ENCODE measurements at regions of chr17 and their contacts with region 1.

Region 1: GRCh38 chr17:72725433-72726068 is 366.9 kb downstream of the SLC39A11 start:
- H3K4me3 Mint-ChIP-seq: no peak overlapping the region
- H3K27ac Mint-ChIP-seq: no peak overlapping the region
- H3K4me1 Mint-ChIP-seq: peaks cover 37% of the 10 kb centered on the region
- H3K27me3 Mint-ChIP-seq: no peaks in the 10 kb centered on the region

Region 2: GRCh38 chr17:72104164-72104862 is 621.2 kb before region 1 on chr17:
- intact Hi-C with region 1: no loop called
- H3K4me3 Mint-ChIP-seq: no peak overlapping the region
- H3K27ac Mint-ChIP-seq: no peak overlapping the region
- H3K4me1 Mint-ChIP-seq: no peaks in the 10 kb centered on the region
- H3K27me3 Mint-ChIP-seq: peaks cover 3% of the 10 kb centered on the region

Region 3: DNA sequence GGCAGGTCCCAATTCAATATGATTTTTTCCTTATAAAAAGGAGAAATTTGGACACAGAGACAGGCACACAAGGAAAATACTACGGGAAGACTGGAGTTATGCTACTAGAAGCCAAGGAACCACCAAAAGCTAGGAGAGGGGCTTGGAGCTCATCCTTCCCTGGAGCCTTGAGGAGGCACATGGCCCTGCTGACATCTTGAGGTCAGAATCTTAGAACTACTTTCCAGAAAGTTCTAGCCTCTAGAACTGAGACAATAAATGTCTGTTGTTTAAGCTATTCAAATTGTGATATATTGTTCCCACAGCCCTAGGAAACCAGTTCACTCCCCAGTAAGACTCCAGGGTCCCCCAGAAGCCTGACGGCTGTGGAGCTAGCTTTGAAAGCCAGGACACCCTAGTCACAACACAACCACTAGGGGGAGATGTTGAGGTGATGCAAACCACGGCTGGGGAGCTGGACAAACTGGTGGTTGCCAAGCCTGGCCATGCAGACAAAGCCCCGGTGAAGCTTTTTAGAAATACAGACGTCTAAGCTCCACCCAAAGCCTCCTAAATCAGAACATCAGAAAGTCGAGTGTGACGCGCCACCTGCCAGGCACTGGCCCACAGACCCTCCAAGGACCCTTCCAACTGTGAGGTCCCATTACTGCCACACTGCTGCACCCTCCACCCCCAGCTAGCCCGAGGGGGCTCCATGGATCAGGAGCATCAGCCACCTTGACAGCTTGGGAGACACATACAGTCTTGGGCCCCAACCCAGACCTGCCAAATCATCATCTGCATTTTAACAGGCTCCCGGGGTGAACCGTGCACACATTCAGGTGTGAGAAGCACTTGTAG is 260.6 kb after region 1 on chr17:
- intact Hi-C with region 1: loop called (anchors 5 kb)
- H3K4me3 Mint-ChIP-seq: no peak overlapping the region
- H3K27ac Mint-ChIP-seq: no peak overlapping the region
- H3K4me1 Mint-ChIP-seq: peaks cover 6% of the 10 kb centered on the region
- H3K27me3 Mint-ChIP-seq: no peaks in the 10 kb centered on the region

Region 4: GRCh38 chr17:73156166-73156840 is 430.8 kb after region 1 on chr17:
- intact Hi-C with region 1: loop called (anchors 2 kb)
- H3K4me3 Mint-ChIP-seq: no peak overlapping the region
- H3K27ac Mint-ChIP-seq: no peak overlapping the region
- H3K4me1 Mint-ChIP-seq: peaks cover 19% of the 10 kb centered on the region
- H3K27me3 Mint-ChIP-seq: peaks cover 25% of the 10 kb centered on the region

Region 5: DNA sequence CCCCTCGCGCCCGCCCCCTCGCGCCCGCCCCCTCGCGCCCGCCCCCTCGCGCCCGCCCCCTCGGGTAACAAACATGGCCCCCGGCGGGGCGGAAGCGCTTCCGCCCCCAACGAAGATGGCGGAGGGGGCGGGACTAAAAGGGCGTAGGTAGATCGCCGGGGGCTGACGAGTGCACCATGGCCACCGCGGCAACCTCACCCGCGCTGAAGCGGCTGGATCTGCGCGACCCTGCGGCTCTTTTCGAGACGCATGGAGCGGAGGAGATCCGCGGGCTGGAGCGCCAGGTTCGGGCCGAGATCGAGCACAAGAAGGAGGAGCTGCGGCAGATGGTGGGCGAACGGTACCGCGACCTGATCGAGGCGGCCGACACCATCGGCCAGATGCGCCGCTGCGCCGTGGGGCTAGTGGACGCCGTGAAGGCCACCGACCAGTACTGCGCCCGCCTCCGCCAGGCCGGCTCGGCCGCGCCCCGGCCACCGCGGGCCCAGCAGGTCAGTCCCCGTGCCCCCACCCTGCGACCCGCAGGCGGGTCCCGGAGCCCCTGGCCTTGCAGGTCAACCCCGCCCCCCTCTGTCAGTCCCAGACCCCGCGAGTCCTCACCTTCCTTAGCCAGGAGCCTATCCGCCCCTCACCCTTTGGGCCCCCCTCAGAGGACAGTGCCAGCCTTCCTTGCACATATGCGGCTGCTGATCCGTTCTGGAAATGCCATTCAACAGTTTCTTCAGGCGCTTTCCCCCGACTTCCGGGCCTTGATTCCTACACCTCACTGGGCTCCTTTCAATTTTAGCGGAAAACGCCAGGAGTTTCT is 467.5 kb after region 1 on chr17 and contains the start of gene COG1:
- intact Hi-C with region 1: loop called (anchors 1 kb)
- H3K4me3 Mint-ChIP-seq: peak within 1 kb of the TSS; percentile 99
- H3K27ac Mint-ChIP-seq: peak within 1 kb of the TSS; percentile 92
- H3K4me1 Mint-ChIP-seq: peaks cover 22% of the 10 kb centered on the region
- H3K27me3 Mint-ChIP-seq: no peaks in the 10 kb centered on the region

Region 6: DNA sequence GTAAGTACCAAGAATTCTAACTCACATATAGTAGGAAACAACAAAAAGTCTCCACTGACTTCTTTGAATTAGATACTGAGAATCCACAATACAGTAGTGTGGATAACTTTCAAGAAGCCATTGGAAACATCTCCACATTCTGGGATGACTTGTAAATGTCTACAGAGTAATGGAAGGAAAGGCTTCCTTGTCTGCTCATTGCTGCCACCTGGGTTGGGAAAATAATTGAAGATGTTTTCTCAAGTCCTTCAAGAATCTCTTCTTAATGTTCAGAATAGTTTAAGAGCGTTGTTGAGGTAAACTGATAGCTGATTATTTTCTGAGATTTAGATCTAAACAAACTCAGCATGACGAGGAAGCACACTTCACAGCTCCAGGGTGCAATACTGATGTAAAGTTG is 522.2 kb after region 1 on chr17:
- intact Hi-C with region 1: loop called (anchors 5 kb)
- H3K4me3 Mint-ChIP-seq: no peak overlapping the region
- H3K27ac Mint-ChIP-seq: no peak overlapping the region
- H3K4me1 Mint-ChIP-seq: no peaks in the 10 kb centered on the region
- H3K27me3 Mint-ChIP-seq: no peaks in the 10 kb centered on the region

Region 7: DNA sequence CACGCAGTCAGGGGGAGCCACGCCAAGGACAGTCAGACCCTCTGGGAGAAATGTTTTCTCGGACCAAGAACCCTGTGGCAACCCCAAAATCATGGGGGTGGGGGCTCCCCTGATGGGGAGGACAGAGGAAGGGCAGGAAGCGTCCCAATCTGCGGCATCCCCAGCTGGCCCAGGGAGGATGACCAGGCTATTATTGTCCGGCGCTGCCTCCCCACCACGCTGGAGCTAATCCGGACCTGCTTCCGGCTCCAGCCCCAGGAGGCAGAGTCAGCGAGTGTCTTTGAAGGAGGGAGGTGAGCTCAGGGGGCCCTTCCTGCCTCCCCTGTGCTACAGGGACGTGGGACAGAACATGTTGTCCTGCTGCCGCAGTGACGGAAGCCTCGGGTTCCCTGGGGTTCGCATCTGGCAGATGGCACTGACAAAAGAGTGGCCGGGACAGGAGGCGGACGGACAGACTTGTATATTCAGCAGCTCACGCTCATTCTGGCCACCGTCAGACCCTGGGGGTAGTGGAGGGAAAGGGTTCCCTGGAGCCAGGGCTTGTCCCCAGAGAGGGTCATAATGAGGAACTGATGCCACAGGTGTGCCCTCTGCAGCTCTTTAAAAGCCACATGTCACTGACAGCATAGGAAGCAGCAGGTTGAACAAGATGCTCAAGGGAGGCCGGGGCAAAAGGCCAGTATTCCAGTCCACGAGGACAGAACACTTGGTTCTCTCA is 640.5 kb after region 1 on chr17:
- intact Hi-C with region 1: loop called (anchors 5 kb)
- H3K4me3 Mint-ChIP-seq: no peak overlapping the region
- H3K27ac Mint-ChIP-seq: no peak overlapping the region
- H3K4me1 Mint-ChIP-seq: peaks cover 2% of the 10 kb centered on the region
- H3K27me3 Mint-ChIP-seq: peaks cover 4% of the 10 kb centered on the region